ENCODE measurements at regions of chr2 and their contacts with region 1.

Region 1: GRCh38 chr2:46503686-46504085 is 24.3 kb downstream of the TMEM247 start:
- DNase-seq: no peak
- ATAC-seq: no peak

Region 2: DNA sequence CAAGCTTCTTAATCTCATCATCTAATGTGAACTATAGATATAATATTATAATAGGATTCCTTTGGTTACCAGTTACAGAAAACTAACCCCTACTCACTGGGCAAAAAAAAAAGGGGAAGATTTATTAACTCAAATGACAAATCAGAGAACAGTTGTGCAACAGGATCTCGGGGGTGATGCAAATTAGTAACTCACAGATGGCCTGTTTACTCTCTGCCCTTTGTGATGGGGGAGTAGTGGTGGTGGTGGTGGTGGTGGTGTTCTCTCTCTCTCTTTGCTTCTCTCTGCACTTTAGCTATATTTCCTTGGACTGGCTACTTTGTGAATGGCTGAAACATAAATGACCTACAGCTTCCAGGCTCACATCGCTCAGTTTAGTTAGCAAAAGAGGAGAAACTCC is 34.7 kb after region 1 on chr2:
- intact Hi-C with region 1: loop called (anchors 1 kb)
- DNase-seq: no peak
- ATAC-seq: no peak